ENCODE measurements at regions of chr3 and their contacts with region 1.

Region 1: DNA sequence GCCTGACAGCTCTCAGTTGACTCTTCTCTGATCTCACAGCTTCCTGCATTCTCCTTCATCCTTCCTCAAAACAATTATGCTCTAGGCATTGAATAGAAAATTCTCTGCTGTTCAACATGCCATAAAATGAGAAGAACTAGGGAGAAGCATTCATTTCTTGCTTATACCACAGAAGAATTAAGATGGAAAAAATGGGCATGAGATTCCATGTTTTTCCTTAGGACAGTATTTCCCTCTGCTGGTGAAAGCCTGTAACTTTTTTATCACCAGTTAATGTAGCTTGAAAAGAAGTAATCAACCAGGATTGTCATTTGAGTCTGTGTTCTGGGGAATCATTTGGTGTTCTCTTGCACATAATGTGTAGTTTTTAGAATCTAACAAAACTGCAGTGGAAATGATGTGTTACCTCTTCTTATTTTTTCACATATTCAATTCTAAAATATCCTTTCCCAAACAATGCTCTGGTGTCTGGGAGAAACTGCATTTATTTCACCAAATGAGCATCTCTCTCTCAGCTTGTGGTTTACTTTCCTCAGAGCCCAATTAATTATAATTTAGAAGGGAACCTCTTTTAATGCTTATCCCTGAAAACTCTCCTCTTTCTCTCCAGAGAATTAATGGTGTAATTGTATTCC is 92.8 kb upstream of the DCBLD2 start:
- DNase-seq: peak; percentile 39
- H3K4me3 ChIP-seq: no peak overlapping the region
- H3K27ac ChIP-seq: no peak overlapping the region
- H3K4me1 ChIP-seq: peaks cover 4% of the 10 kb centered on the region
- H3K27me3 ChIP-seq: no peaks in the 10 kb centered on the region
- CTCF ChIP-seq: peak; percentile 59 to 68

Region 2: GRCh38 chr3:98359993-98360675 is 634.1 kb before region 1 on chr3:
- CTCF ChIA-PET with region 1: no interaction called
- dilution Hi-C with region 1: no loop called
- in situ Hi-C with region 1: no loop called
- intact Hi-C with region 1: loop called (anchors 10 kb)
- DNase-seq: peak; percentile 65
- H3K4me3 ChIP-seq: no peak overlapping the region
- H3K27ac ChIP-seq: no peak overlapping the region
- H3K4me1 ChIP-seq: peaks cover 4% of the 10 kb centered on the region
- H3K27me3 ChIP-seq: no peaks in the 10 kb centered on the region
- CTCF ChIP-seq: peak; percentile 22 to 43

Region 3: DNA sequence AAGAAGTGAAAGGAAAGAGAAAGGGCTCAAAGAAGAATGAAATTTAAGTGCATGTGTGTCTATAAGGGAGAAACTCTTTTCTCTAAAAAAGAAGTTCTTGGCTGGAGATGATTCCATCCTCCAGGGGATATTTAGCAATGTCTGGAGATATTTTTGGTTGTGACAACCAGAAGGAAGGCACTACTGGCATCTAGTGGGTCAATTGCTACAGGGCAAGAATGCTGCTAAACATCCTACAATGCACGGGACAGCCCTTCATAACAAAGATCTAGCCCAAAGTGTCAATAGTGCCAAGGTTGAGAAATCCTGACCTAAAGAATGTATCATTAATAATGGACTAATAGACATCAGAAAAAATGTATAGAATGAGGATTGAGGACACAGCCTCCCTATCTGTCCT is 288.5 kb before region 1 on chr3:
- CTCF ChIA-PET with region 1: no interaction called
- dilution Hi-C with region 1: no loop called
- in situ Hi-C with region 1: no loop called
- intact Hi-C with region 1: loop called (anchors 5 kb)
- DNase-seq: no peak
- H3K4me3 ChIP-seq: no peak overlapping the region
- H3K27ac ChIP-seq: no peak overlapping the region
- H3K4me1 ChIP-seq: no peaks in the 10 kb centered on the region
- H3K27me3 ChIP-seq: no peaks in the 10 kb centered on the region
- CTCF ChIP-seq: peak; percentile 28 to 59

Region 4: DNA sequence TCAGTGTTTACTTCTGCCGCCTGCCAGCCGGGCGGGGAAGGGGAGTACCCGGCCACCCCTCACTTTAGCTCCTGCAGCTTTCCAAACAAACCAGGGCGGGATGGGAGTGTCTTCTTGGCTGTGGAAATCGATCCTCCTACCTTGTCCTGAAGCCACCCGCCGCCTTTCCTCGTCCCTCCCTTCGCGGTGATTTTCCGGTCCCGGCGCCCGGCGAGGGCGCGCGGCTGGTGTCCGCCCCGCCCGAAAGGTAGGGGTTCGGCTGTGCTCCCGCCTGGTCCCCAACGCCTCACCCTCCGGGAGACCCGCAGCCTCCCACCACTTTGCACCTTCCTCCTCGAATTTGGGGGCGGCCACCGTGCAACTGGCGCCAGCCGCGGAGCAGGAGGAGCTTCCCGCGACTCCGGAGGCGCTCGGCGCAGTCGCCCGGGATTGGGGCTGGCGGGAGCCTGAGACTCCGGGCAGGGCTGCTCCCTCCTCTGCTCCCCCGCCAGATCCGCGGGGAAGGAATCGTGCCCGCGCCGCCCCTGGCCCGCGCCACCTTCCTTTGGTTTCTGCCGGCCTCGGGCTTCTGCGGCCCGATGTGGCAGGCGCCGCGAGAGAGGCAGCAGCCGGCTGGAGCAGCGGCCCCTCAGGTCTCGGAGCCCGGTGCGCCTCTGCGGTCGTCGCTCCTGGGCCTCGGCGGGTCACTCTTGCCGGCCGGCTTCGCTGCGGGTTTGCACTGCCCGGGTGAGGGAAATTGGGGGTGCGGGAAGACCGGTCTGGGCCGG is 261.8 kb before region 1 on chr3:
- CTCF ChIA-PET with region 1: no interaction called
- dilution Hi-C with region 1: no loop called
- in situ Hi-C with region 1: no loop called
- intact Hi-C with region 1: loop called (anchors 5 kb)
- DNase-seq: peak; percentile 58
- H3K4me3 ChIP-seq: peak overlapping the region; percentile 88 to 90 (median 89)
- H3K27ac ChIP-seq: peak overlapping the region; percentile 52
- H3K4me1 ChIP-seq: peaks cover 15% of the 10 kb centered on the region
- H3K27me3 ChIP-seq: no peaks in the 10 kb centered on the region
- CTCF ChIP-seq: no peak

Region 5: DNA sequence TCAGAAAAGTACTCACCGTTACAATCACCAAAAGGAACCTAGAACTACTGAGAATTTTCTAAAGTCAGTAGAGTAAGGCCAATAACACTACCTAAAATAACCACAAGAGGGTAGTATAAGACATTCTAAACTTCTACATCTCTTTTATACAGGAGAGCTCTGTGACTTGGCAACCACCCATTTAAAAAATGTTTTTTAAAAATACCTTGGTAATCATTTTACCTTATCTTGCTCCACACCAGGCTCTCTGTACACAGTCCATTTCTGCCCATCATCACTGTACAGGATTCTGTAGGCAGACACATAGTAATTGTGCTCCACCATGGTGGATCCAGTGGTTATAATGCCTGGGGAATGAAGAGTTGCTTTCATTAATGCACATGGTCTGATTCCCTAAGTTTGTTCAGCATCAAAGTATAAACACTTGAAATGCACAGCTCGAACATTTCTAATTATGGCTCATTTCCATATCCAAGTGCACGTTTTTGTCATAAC is 176.7 kb before region 1 on chr3:
- CTCF ChIA-PET with region 1: interaction called, 4 read pairs
- dilution Hi-C with region 1: no loop called
- in situ Hi-C with region 1: loop called (anchors 5 to 10 kb)
- intact Hi-C with region 1: loop called (anchors 1 kb)
- DNase-seq: no peak
- H3K4me3 ChIP-seq: no peak overlapping the region
- H3K27ac ChIP-seq: no peak overlapping the region
- H3K4me1 ChIP-seq: peaks cover 3% of the 10 kb centered on the region
- H3K27me3 ChIP-seq: no peaks in the 10 kb centered on the region
- CTCF ChIP-seq: peak; percentile 57 to 69

Region 6: GRCh38 chr3:99218468-99218867 is 224.2 kb after region 1 on chr3:
- CTCF ChIA-PET with region 1: no interaction called
- dilution Hi-C with region 1: no loop called
- in situ Hi-C with region 1: no loop called
- intact Hi-C with region 1: no loop called
- DNase-seq: no peak
- H3K4me3 ChIP-seq: no peak overlapping the region
- H3K27ac ChIP-seq: no peak overlapping the region
- H3K4me1 ChIP-seq: no peaks in the 10 kb centered on the region
- H3K27me3 ChIP-seq: no peaks in the 10 kb centered on the region
- CTCF ChIP-seq: no peak

Measured in mammary epithelial cell (primary cell).